Sigmoid colon (tissue), 7 donors: ENCODE measurements at regions of chr2 and their contacts with region 1.

Region 1: DNA sequence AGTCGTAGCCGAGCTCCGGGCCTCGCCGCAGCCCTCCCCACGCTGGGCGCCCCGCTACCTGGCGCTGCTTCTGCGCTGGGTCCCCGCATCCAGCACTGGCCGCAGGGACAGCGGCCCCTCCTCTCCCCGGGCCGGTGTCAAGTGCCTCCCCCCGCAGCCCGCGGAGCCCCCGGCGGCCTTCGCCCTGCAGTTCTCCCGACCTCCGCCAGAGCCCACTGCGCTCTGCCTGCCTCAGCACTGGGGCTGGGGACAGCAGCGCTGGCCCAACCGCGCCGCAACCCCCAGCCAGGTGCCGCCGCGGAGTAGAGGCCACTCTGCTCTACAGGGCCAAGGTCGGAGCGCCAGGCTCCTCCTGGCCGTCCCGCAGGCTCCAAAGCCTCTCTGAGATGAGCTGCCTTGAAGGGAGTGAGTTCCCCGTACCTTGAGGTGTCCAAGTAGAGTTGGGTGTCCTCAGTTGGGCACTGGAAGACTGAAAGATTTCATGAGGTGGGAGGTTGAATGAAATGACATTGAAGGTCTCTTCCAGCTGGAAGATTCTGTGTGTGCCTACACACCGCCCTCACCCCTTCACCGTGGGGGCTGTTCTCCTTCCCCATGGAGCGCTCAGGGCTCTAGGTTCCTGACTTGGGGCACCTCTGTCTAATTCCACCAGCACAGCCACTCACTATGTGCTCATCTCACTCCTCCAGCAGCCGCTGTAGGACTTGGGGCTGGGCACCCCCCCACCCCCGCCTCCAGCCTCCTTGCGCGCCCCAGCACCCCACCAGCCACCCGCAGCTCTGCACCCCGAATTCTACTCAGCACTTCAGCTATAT is 854 bp upstream of the DNMT3A start:
- DNase-seq: peak; percentile 92
- H3K4me3 ChIP-seq: peak overlapping the region; percentile 51 to 89 (median 73)
- H3K27ac ChIP-seq: peak overlapping the region; percentile 84 to 92 (median 88)
- H3K4me1 ChIP-seq: peaks cover 0 to 41% (median 33%) of the 10 kb centered on the region in 4 donors
- H3K27me3 ChIP-seq: no peaks in the 10 kb centered on the region
- CTCF ChIP-seq: peak; percentile 97 to 99 (median 98)
- EP300 ChIP-seq: no peak
- POLR2A ChIP-seq: no peak

Region 2: DNA sequence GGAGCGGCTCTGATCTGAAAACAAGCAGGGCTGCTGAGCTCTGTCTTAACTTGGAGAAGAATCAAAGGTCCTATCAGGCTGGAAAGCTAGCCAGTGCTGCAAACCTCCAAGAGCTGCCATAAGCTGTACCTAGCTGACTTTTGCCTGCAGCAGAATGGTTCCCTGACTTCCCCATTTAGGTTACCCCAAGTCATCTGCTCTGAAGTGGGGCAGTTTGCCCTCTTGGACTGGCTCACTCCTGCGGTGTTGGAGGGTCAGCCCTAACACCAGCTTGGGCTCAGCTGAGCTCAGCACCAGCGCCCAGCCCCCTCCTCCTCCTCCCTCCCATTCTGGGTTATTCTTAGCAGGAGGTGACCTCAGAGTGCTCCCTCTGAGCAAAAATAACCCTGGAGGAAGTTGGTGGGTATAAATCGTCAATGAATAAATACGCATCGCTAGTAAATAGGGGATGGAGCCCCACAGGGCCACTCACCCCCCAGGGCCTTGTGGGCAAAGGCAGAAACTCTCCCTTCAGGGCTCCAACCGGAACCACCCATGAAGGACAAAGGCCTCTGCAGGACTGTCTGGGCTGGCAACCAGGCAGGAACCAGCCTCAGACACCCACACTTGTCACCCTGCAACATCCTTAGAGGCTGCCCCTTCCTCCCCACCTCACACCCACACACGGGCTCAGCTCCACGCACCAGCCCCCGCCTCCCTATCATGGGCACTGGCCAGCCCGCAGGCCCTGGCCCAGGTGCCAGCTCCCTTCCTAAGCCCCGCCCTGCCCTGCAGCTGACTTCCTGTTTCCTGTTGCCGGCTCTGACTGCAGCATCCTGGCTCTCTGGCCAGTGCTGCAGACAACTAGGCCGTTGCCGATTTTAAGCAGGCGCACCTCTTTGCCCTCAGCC is 47.8 kb before region 1 on chr2:
- intact Hi-C with region 1: loop called (anchors 5 kb)
- DNase-seq: peak; percentile 82
- H3K4me3 ChIP-seq: peak overlapping the region in 1 of 4 donors; percentile 9
- H3K27ac ChIP-seq: peak overlapping the region; percentile 74 to 89 (median 82)
- H3K4me1 ChIP-seq: peaks cover 0 to 47% (median 43%) of the 10 kb centered on the region in 4 donors
- H3K27me3 ChIP-seq: no peaks in the 10 kb centered on the region
- CTCF ChIP-seq: peak in 1 of 4 experiments; percentile 15
- EP300 ChIP-seq: no peak
- POLR2A ChIP-seq: no peak

Region 3: GRCh38 chr2:25309402-25309801 is 33.2 kb before region 1 on chr2:
- intact Hi-C with region 1: loop called (anchors 5 kb)
- DNase-seq: no peak
- H3K4me3 ChIP-seq: no peak overlapping the region
- H3K27ac ChIP-seq: no peak overlapping the region
- H3K4me1 ChIP-seq: peaks cover 0 to 97% (median 85%) of the 10 kb centered on the region in 4 donors
- H3K27me3 ChIP-seq: no peaks in the 10 kb centered on the region
- CTCF ChIP-seq: peak in 2 of 4 experiments; percentile 35 to 44
- EP300 ChIP-seq: no peak
- POLR2A ChIP-seq: no peak

Region 4: GRCh38 chr2:25376750-25377621 is 34.4 kb after region 1 on chr2:
- intact Hi-C with region 1: loop called (anchors 1 kb)
- DNase-seq: peak; percentile 93
- H3K4me3 ChIP-seq: peak overlapping the region in 3 of 4 donors; percentile 7 to 33 (median 31)
- H3K27ac ChIP-seq: peak overlapping the region; percentile 45 to 71 (median 52)
- H3K4me1 ChIP-seq: peaks cover 0 to 14% (median 13%) of the 10 kb centered on the region in 4 donors
- H3K27me3 ChIP-seq: no peaks in the 10 kb centered on the region
- CTCF ChIP-seq: peak; percentile 44 to 94 (median 72)
- EP300 ChIP-seq: no peak
- POLR2A ChIP-seq: no peak